Common myeloid progenitor, CD34-positive (primary cell): ENCODE measurements at regions of chr5 and their contacts with region 1.

Region 1: DNA sequence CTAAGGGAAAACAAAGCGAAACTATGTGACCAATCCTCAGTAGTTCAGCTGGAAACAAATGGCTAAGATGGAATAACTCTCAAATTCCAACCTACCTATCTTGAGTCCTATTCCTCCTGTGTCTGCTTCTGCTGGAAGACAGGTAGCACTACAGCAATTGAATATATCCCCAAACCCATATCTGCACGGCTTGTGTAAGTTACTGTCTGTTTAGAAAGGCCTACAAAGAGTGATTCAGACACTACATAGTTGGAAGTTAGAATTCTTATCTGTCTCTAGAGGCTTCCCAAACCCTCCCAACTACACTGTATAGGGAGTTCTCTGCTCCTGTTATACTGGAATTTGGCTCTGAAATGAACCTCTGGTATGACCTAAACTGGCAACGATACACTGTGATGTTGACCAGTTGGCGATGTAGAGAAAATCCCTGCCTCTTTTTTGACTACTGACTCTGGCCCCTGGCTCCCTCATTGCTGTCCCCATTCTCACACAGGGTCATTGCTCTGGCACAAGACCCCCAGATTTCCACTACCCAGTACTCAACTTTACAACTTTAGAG is 22.6 kb upstream of the NADK2 start:
- DNase-seq: no peak
- H3K4me3 ChIP-seq: no peak overlapping the region
- H3K27ac ChIP-seq: no peak overlapping the region
- H3K4me1 ChIP-seq: no peaks in the 10 kb centered on the region
- H3K27me3 ChIP-seq: no peaks in the 10 kb centered on the region

Region 2: DNA sequence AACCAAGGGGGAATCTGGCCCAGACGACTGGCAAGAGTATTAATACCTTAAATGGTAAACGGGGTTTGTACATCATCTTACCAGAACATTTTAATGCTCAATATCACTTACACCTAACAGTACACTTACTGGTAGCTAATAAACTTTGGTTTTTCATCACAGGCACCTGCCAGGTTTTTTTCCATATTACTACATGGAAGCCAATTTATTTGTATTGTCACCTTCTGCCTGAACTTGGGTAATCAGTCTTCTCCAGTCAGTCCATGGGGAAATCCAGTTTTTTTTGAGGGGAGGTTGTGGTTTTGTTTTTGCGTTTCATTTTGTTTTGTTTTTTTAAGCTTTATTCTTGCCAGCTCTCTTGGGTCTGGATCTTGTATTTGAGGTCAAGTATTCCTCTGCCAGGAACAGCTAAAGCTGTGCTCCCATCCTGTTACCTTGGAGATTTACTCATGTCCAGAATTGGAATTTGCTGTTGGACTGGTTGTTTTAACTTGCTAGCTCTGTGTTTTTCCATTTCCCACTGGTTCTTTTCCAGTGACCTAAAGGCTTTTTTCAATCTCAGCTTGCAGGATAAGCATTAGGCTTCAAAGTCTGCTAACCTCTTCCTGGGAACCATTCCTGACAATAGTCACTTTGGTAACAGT is 11.4 kb before region 1 on chr5:
- CTCF ChIA-PET with region 1: interaction called, 15 read pairs
- POLR2A ChIA-PET with region 1: no interaction called
- DNase-seq: no peak
- H3K4me3 ChIP-seq: no peak overlapping the region
- H3K27ac ChIP-seq: no peak overlapping the region
- H3K4me1 ChIP-seq: no peaks in the 10 kb centered on the region
- H3K27me3 ChIP-seq: no peaks in the 10 kb centered on the region

Region 3: DNA sequence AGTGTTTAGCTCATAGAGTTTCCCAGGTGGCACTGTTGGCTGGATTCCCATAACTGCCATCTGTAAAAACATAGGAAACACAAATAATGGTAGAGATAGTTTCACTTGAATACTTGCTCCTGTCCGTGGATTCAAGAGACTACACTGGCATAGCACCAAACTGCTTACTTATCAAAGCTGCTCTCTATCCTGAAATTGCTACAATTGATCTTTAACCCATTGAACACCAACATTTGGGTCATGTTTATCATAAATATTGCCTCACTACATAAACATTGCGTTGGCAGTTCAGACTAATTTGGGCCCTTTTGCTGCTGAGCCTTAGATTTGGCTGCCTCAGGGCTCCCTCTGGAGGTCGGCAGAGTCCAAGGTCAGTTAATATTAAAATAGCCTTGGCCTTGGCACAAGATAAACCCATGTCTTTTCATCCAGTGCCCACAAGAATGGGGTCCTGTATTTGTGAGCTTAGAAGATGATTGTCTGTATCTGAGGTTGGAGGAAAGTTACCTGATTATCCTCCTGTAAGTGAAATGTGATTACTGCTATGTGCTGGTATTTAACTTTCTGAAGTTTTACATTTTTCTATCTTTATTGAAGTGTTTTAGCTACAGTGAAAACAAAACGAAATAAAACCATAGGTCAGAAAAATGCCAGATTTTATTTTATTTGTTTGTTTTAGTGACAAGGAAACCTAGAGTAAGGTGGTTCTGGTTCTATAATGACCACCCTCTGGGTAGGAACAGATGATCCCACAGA is 41.5 kb after region 1 on chr5:
- CTCF ChIA-PET with region 1: interaction called, 23 read pairs
- POLR2A ChIA-PET with region 1: no interaction called
- DNase-seq: peak; percentile 60 to 72 (median 67)
- H3K4me3 ChIP-seq: no peak overlapping the region
- H3K27ac ChIP-seq: no peak overlapping the region
- H3K4me1 ChIP-seq: peaks cover 0 to 26% (median 4%) of the 10 kb centered on the region in 4 experiments
- H3K27me3 ChIP-seq: no peaks in the 10 kb centered on the region

Region 4: DNA sequence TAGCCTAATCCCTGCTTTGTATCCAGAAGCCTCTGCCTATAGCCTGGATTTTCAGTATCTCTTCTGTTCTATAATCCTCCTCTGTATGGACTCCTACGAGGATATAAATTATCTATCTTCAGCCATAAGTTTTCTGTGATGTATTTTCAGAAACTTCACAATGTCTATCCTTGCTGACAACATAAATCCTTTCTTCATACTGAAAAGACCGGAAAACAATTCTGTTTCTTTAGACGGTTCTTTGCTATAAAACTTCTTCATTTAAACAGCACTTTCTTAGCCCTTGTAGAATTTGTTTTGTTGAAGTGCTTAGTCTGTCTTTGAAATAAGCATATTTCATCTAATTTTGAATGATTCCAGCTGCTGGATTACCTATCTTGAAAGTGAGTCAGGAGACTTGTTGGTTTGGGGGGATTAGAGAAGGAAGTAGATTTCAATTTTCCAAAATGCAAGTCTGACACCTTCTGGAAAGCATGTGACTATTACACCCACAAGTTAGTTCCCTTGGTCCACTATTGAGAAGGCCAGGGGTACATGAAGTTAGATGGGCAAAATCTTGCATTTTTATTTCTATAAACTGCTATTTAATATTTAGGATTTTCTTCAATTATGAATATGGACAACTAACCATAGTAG is 133.7 kb after region 1 on chr5:
- CTCF ChIA-PET with region 1: interaction called, 28 read pairs
- POLR2A ChIA-PET with region 1: no interaction called
- DNase-seq: peak; percentile 54 to 63 (median 62)
- H3K4me3 ChIP-seq: no peak overlapping the region
- H3K27ac ChIP-seq: no peak overlapping the region
- H3K4me1 ChIP-seq: peaks cover 0 to 26% (median 6%) of the 10 kb centered on the region in 4 experiments
- H3K27me3 ChIP-seq: no peaks in the 10 kb centered on the region